ENCODE measurements at regions of chr18 and their contacts with region 1.

Region 1: GRCh38 chr18:55322178-55322735 is 265.7 kb downstream of the TCF4 start:
- DNase-seq: peak in 1 of 2 experiments; percentile 77
- H3K4me3 ChIP-seq: peak overlapping the region; percentile 61 to 73 (median 66); a peak in 7 of 8 replicates
- H3K27ac ChIP-seq: no peak overlapping the region
- H3K4me1 ChIP-seq: peaks cover 0 to 9% (median 5%) of the 10 kb centered on the region in 4 experiments; a peak in 3 of 7 replicates
- H3K27me3 ChIP-seq: no peaks in the 10 kb centered on the region
- CTCF ChIP-seq: peak in 1 of 3 experiments; percentile 10; a peak in 1 of 4 replicates
- EP300 ChIP-seq: no peak
- POLR2A ChIP-seq: peak in 1 of 2 experiments; percentile 32; a peak in 1 of 3 replicates
- RAD21 ChIP-seq: peak; percentile 11 to 24; a peak in 3 of 4 replicates

Region 2: DNA sequence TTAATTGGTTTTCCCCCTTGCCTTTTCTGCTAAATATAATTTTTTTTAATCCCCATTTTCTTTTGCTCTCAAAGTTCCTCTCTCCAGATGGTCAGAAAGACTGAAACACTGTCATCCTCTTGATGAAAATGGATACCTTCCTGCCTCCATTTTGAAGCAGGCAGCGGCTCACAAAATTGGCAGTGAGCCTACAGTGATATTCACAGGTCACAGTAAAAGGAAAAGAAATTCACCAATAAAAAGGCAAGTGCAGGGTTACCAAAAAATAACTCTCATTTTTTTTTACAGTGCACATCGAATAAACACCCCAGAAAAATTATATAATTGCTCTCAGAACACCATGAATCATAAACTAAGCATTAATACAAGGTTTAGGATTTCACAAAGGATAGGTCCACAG is 41.8 kb before region 1 on chr18:
- CTCF ChIA-PET with region 1: no interaction called
- POLR2A ChIA-PET with region 1: no interaction called
- DNase-seq: no peak
- H3K4me3 ChIP-seq: no peak overlapping the region
- H3K27ac ChIP-seq: no peak overlapping the region
- H3K4me1 ChIP-seq: no peaks in the 10 kb centered on the region; a peak in 1 of 7 replicates
- H3K27me3 ChIP-seq: no peaks in the 10 kb centered on the region
- CTCF ChIP-seq: no peak
- EP300 ChIP-seq: no peak
- POLR2A ChIP-seq: no peak
- RAD21 ChIP-seq: no peak

Region 3: GRCh38 chr18:55310044-55310676 is 12.1 kb before region 1 on chr18:
- CTCF ChIA-PET with region 1: interaction called, 14 read pairs
- POLR2A ChIA-PET with region 1: interaction called, 4 read pairs
- DNase-seq: no peak
- H3K4me3 ChIP-seq: no peak overlapping the region
- H3K27ac ChIP-seq: no peak overlapping the region
- H3K4me1 ChIP-seq: peaks cover 0 to 12% (median 5%) of the 10 kb centered on the region in 4 experiments; a peak in 4 of 7 replicates
- H3K27me3 ChIP-seq: no peaks in the 10 kb centered on the region
- CTCF ChIP-seq: no peak
- EP300 ChIP-seq: no peak
- POLR2A ChIP-seq: no peak
- RAD21 ChIP-seq: no peak